Heart left ventricle (tissue), 16 donors: ENCODE measurements at regions of chr3 and their contacts with region 1.

Region 1: DNA sequence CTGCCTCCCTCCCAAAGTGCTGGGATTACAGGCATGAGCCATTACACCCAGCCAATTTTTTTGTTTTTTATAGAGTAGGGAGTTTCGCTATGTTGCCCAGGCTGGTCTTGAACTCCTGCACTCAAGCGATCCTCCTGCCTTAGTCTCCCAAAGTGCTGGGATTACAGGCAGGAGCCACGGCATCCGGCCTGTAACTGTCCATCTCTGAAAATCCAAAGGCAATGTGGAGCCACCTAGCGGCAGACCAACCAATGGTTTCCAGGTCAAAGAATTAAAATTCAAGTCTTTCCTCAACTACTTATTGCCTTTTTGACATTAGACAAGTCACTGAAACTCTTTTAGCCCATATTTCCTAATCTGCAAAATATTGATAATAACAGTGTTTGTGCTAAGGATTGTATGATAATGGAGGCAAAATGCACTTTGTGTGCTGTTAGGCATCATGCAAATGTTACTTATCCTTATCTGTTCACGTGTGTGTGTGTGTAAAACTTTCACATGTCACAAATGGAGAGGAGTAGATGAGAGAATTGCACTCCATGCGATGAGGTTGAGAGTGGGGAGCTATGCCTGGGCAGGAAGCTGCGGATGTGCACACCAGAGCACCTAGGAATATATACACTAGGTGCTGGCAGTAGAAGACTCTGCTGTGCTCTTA is 48.7 kb downstream of the COL8A1 start:
- DNase-seq: peak; percentile 48 to 60 (median 52)
- ATAC-seq: peak in 3 of 4 donors; percentile 44 to 66 (median 45)
- H3K4me3 ChIP-seq: no peak overlapping the region
- H3K27ac ChIP-seq: no peak overlapping the region
- H3K4me1 ChIP-seq: peaks cover 0 to 20% (median 2%) of the 10 kb centered on the region in 12 donors
- H3K27me3 ChIP-seq: no peaks in the 10 kb centered on the region
- CTCF ChIP-seq: peak; percentile 58 to 79 (median 70)
- POLR2A ChIP-seq: no peak

Region 2: DNA sequence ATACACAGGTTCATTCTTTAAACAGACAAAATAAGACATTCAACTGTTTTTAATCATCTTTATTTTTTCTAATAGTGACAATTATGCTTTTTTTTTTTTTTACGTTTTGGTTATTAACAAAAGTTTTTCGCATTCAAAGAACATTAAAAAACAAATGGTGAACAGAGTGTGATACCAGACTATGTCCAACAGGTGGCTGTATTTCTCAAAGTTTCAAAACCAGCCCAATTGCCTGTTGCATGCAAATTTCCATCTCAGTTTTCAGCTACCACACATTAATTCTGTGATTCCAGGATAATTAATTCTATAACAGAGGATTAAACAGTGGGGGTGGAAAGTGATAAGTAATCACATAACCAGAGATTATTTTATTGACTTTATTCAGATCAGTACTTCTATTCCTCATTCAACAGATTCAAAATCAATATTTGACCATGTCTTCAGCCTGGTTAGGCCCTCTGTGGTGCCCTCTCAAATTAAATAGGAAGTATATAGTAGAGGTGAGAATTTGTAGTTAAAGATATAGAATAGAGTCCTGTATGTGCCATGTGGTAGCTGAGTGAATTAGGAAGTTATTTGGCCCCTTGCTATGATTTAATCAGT is 663.4 kb before region 1 on chr3:
- intact Hi-C with region 1: loop called in 1 of 10 experiments (anchors 5 kb)
- DNase-seq: no peak
- ATAC-seq: no peak
- H3K4me3 ChIP-seq: no peak overlapping the region
- H3K27ac ChIP-seq: no peak overlapping the region
- H3K4me1 ChIP-seq: no peaks in the 10 kb centered on the region
- H3K27me3 ChIP-seq: no peaks in the 10 kb centered on the region
- CTCF ChIP-seq: peak; percentile 46 to 78 (median 70)
- POLR2A ChIP-seq: no peak

Region 3: GRCh38 chr3:99373088-99373880 is 313.8 kb before region 1 on chr3:
- intact Hi-C with region 1: no loop called
- DNase-seq: no peak
- ATAC-seq: no peak
- H3K4me3 ChIP-seq: no peak overlapping the region
- H3K27ac ChIP-seq: no peak overlapping the region
- H3K4me1 ChIP-seq: no peaks in the 10 kb centered on the region
- H3K27me3 ChIP-seq: no peaks in the 10 kb centered on the region
- CTCF ChIP-seq: no peak
- POLR2A ChIP-seq: no peak

Region 4: GRCh38 chr3:99638167-99638948 is 48.7 kb before region 1 on chr3 and contains the start of gene COL8A1:
- intact Hi-C with region 1: loop called in 1 of 10 experiments (anchors 5 kb)
- DNase-seq: peak; percentile 61 to 80 (median 76)
- ATAC-seq: peak; percentile 71 to 94 (median 88)
- H3K4me3 ChIP-seq: peak within 1 kb of the TSS; percentile 22 to 76 (median 58)
- H3K27ac ChIP-seq: peak within 1 kb of the TSS; percentile 50 to 91 (median 78)
- H3K4me1 ChIP-seq: peaks cover 0 to 26% (median 5%) of the 10 kb centered on the region in 12 donors
- H3K27me3 ChIP-seq: peaks cover 0 to 39% (median 15%) of the 10 kb centered on the region in 9 donors
- CTCF ChIP-seq: no peak
- POLR2A ChIP-seq: peak in 1 of 2 donors; percentile 41
- total RNA-seq, gene COL8A1: 12.5 to 39.2 (median 22.7) TPM

Region 5: DNA sequence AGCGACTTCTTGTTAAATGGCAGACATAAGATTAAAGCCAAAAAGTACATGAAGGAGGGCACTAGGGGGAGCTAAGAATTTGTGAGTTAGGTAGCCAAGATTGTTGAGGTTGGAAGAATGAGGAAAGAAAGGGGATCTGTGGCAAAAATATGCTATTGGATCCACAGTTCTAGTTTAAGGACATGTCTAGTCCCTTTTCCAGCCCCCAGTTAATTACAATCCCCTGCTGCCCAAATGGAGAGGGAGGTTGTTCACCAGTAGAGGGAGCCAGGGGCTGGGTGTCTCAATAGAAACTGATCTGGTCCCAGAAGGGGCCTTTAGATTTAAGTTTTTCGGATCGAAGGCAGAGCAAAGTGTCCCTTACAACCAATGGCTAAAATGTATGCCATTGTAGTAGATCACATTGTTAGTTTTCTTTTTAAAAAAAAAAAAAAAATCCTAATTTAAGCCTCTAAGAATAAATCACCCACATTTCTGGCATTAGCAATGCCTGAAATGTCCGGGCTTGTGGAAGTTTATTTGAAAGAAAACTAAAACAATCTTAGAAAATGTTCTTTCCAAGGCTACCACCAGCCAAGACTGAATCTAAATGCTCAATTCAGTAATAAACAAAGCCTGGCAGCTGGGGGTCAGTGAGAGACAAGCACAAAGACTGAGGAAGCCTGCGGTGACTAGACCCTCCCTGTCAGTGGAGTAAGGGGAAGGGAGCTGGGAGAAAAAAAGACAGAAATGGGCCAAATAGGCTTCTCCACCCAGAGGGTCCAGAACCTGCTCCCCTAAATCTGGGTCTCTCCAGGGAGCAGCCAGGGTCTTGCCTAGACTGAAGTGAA is 41.6 kb before region 1 on chr3:
- intact Hi-C with region 1: loop called in 4 of 10 experiments (anchors 1 to 5 kb)
- DNase-seq: peak in 1 of 5 donors; percentile 15
- ATAC-seq: peak in 2 of 4 donors; percentile 30 to 38
- H3K4me3 ChIP-seq: peak overlapping the region in 2 of 12 donors; percentile 0
- H3K27ac ChIP-seq: peak overlapping the region in 9 of 12 donors; percentile 3 to 74 (median 61)
- H3K4me1 ChIP-seq: peaks cover 0 to 44% (median 7%) of the 10 kb centered on the region in 12 donors
- H3K27me3 ChIP-seq: peaks cover 0 to 4% (median 0%) of the 10 kb centered on the region in 9 donors
- CTCF ChIP-seq: peak; percentile 24 to 70 (median 50)
- POLR2A ChIP-seq: no peak

Region 6: DNA sequence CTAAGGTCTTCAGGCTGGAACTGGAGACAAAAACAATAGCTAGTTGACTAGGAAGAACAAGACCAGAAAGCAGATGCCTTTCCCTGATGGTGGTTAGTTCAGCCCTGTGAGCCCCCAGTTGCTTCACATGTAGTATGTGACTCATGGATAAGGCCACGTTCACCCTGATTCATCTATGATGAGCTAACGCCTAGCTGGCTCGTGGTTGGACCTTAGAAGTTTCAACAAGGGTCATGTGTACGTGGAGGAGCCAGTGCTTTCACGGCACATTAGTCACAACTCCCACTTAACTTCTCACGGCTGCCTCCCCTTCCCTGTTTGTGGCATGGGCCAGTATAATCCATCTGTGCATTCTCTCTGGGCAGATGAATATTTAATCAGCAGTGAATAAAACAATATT is 28.1 kb before region 1 on chr3:
- intact Hi-C with region 1: loop called in 1 of 10 experiments (anchors 1 kb)
- DNase-seq: peak in 3 of 5 donors; percentile 25 to 67 (median 50)
- ATAC-seq: peak; percentile 16 to 96 (median 73)
- H3K4me3 ChIP-seq: no peak overlapping the region
- H3K27ac ChIP-seq: peak overlapping the region in 11 of 12 donors; percentile 14 to 76 (median 38)
- H3K4me1 ChIP-seq: peaks cover 0 to 28% (median 4%) of the 10 kb centered on the region in 12 donors
- H3K27me3 ChIP-seq: no peaks in the 10 kb centered on the region
- CTCF ChIP-seq: no peak
- POLR2A ChIP-seq: no peak

Region 7: DNA sequence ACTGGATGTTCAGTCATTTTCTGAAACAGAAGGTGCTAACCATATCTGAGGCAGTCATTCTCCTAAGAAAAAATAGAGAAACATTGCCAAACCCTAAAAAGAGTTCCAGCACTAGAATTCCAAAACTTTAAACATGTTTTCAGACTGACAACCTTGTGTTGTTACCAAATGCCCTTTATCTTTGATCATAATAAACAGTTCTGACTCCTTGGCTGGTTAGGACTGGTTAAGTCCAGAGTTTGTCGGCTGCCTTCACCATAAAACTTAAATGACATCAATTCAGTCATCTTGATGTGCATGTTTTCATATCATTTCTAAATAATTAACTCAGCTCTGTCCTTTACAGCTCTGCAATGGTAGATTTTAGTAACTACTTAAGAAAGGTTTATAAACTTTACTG is 19.3 kb after region 1 on chr3:
- intact Hi-C with region 1: loop called in 1 of 10 experiments (anchors 2 kb)
- DNase-seq: no peak
- ATAC-seq: no peak
- H3K4me3 ChIP-seq: no peak overlapping the region
- H3K27ac ChIP-seq: no peak overlapping the region
- H3K4me1 ChIP-seq: peaks cover 0 to 32% (median under 1%) of the 10 kb centered on the region in 12 donors
- H3K27me3 ChIP-seq: no peaks in the 10 kb centered on the region
- CTCF ChIP-seq: no peak
- POLR2A ChIP-seq: no peak

Region 8: DNA sequence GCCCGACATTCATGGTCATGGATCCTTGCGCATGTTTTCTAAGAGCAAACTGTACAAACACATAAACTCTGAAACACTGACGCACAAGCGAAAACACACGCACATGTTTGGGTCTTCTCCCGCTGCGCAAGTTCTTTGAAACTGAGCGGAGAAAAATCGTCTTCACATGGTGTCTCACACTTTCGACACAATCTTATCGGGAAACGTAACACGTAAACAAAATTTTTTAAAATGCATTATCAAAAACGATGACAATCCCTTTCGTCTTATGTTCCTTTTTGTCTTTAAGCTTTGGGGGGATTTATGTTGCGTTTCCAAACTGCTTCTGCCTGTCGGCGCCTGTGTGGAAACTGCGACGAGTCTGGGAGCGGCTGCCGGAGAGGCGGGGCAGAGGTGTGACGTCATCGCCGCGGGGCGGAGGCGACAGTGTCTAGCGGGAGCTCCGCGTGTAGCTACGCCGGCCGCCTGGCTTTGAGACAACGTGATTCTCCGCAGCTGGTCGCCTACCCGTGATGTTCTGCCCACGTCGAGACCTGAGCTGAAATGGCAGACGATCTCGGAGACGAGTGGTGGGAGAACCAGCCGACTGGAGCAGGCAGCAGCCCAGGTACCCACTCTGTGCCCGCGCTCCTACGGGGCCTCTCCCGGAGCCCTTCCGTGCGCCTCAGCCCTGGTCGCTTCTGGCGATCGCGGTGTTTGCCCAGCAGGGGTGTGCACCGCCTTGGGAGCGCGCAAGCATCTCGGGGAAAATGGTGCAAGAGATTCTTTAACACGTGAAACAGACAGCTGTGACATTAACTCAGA is 130.6 kb after region 1 on chr3 and contains the start of gene CMSS1:
- intact Hi-C with region 1: no loop called
- DNase-seq: peak; percentile 94 to 98 (median 96)
- ATAC-seq: peak; percentile 97 to 99 (median 98)
- H3K4me3 ChIP-seq: peak within 1 kb of the TSS; percentile 40 to 94 (median 80)
- H3K27ac ChIP-seq: peak within 1 kb of the TSS; percentile 79 to 93 (median 88)
- H3K4me1 ChIP-seq: peaks cover 0 to 24% (median 12%) of the 10 kb centered on the region in 12 donors
- H3K27me3 ChIP-seq: no peaks in the 10 kb centered on the region
- CTCF ChIP-seq: peak in 2 of 12 donors; percentile 30 to 36
- POLR2A ChIP-seq: peak in 1 of 2 donors; percentile 36
- total RNA-seq, gene CMSS1: 13.5 to 48.4 (median 34.8) TPM